Right ventricle myocardium inferior (tissue), 1 donor: ENCODE measurements at regions of chr5 and their contacts with region 1.

Region 1: DNA sequence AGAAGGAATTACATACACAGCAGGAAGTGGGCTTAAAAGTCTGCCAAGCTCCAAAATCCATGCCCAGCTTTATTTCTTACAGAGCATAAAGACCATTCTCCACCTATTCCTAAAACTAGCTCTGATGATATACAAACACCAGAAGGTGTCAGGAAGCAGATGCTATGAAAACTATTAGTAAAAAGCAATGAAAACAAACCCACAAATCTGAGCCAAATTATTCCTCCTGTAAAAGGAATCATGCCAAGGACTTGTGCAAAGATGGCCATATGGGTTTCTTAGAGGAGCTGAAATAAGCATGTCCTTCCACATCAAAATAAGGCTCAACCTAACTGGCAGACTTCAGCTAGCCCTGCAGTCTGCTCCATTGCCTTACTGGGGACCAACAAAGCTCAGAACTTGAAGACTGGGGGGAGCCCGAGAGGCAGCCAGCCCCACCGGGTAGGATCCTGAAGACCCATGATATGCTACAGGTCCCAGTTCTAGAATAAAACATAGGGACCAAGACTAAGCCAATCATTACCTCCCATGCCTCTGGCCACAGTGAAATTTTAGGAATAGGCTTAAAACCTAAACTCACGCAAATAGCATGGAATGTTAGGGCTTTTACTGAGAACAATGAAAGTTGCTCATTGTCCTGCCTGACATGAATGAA is 42.8 kb upstream of the GABRP start:
- DNase-seq: no peak
- ATAC-seq: no peak

Region 2: GRCh38 chr5:170791325-170791954 is 50.8 kb after region 1 on chr5:
- intact Hi-C with region 1: loop called (anchors 1 kb)
- DNase-seq: no peak
- ATAC-seq: peak; percentile 70

Region 3: GRCh38 chr5:171122372-171122771 is 381.7 kb after region 1 on chr5:
- intact Hi-C with region 1: no loop called
- DNase-seq: no peak
- ATAC-seq: no peak